ENCODE measurements at regions of chr6 and their contacts with region 1.

Region 1: GRCh38 chr6:41920921-41921711 is at the starts of genes BYSL and MED20:
- DNase-seq: peak; percentile 83
- ATAC-seq: peak; percentile 91
- H3K4me3 ChIP-seq: peak within 1 kb of the TSS; percentile 67
- H3K27ac ChIP-seq: peak within 1 kb of the TSS; percentile 95
- H3K4me1 ChIP-seq: peaks cover 4% of the 10 kb centered on the region; the same call in 1 of the 2 replicates
- H3K27me3 ChIP-seq: no peaks in the 10 kb centered on the region
- CTCF ChIP-seq: peak; percentile 92 to 98 (median 94)
- EP300 ChIP-seq: 0 out of 4 replicates have a peak, but pooled peaks have one; percentile 35 to 57
- POLR2A ChIP-seq: peak; percentile 81
- RAD21 ChIP-seq: no peak
- polyA plus RNA-seq, gene BYSL: 12.6 to 28.4 TPM
- polyA plus RNA-seq, gene MED20: 15.9 to 21.7 TPM

Region 2: GRCh38 chr6:41787219-41787917 is 133.7 kb before region 1 on chr6 and contains the start of gene TOMM6:
- CTCF ChIA-PET with region 1: interaction called, 39 read pairs
- POLR2A ChIA-PET with region 1: interaction called, 9 read pairs
- RAD21 ChIA-PET with region 1: interaction called, 16 read pairs
- SMC1A ChIA-PET with region 1: interaction called, 6 read pairs
- in situ Hi-C with region 1: no loop called
- intact Hi-C with region 1: loop called (anchors 5 kb)
- DNase-seq: peak; percentile 77
- ATAC-seq: peak; percentile 90
- H3K4me3 ChIP-seq: peak within 1 kb of the TSS; percentile 100
- H3K27ac ChIP-seq: peak within 1 kb of the TSS; percentile 93
- H3K4me1 ChIP-seq: peaks cover 22% of the 10 kb centered on the region
- H3K27me3 ChIP-seq: no peaks in the 10 kb centered on the region
- CTCF ChIP-seq: peak; percentile 84 to 89 (median 88)
- EP300 ChIP-seq: no peak
- POLR2A ChIP-seq: peak; percentile 89
- RAD21 ChIP-seq: no peak
- polyA plus RNA-seq, gene TOMM6: 653 to 729 TPM

Region 3: DNA sequence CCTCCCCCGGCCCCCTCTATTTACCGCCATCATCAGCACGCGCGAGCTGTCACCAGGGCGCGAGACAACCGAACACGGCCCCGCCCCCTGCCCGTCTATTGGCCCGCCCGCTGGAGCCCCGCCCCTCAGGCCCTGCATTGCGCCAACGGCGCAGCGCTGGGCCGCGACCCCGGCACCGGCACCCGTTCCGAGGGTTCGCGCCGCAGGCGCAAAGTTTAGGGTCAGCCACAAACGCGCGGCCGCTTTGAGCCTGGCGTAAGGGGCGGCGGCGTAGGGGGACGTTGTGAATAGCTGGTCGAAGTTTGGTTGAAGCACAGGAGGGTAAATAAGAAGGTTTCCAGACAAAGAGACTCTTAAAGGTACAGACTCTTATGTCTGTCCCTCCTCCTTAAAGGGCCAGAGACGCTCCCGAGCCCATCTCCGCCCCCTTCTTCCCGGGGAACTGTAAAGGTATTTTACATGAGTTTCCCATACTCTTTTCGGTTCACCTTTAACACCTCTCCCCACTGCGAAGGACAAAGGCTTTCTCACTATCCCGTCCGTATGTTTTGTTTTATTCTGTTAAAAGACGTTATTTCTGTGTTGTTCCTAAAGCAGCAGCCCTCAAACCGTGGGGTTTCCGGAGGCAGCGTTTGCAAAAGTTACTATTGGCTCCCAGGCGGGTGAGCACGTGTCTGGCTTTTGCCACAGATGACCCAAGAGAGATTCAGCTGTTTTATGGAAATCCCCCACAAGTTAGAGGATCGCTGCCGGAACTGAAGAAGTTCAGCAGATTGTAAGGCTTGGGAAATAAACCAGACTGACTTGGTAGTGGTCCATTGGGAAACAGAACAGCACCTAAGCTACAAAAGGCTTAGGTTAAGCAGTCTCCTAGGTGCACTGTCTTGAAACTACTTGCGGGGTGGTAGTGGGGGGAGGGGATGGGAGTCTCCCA is 25.5 kb before region 1 on chr6 and contains the start of gene USP49:
- CTCF ChIA-PET with region 1: interaction called, 14 read pairs
- POLR2A ChIA-PET with region 1: interaction called, 8 read pairs
- RAD21 ChIA-PET with region 1: interaction called, 10 read pairs
- SMC1A ChIA-PET with region 1: interaction called, 8 read pairs
- in situ Hi-C with region 1: no loop called
- intact Hi-C with region 1: loop called (anchors 1 kb)
- DNase-seq: peak; percentile 65
- ATAC-seq: peak; percentile 96
- H3K4me3 ChIP-seq: peak within 1 kb of the TSS; percentile 89
- H3K27ac ChIP-seq: peak within 1 kb of the TSS; percentile 90
- H3K4me1 ChIP-seq: peaks cover 6% of the 10 kb centered on the region; the same call in 1 of the 2 replicates
- H3K27me3 ChIP-seq: no peaks in the 10 kb centered on the region
- CTCF ChIP-seq: no peak
- EP300 ChIP-seq: no peak
- POLR2A ChIP-seq: peak; percentile 75
- RAD21 ChIP-seq: no peak
- polyA plus RNA-seq, gene USP49: 1.0 TPM

Region 4: GRCh38 chr6:41941280-41942066 is 20.4 kb after region 1 on chr6 and contains the start of gene CCND3:
- CTCF ChIA-PET with region 1: interaction called, 137 read pairs
- POLR2A ChIA-PET with region 1: interaction called, 4 read pairs
- RAD21 ChIA-PET with region 1: interaction called, 16 read pairs
- SMC1A ChIA-PET with region 1: interaction called, 12 read pairs
- in situ Hi-C with region 1: no loop called
- intact Hi-C with region 1: no loop called
- DNase-seq: peak; percentile 44
- ATAC-seq: peak; percentile 94
- H3K4me3 ChIP-seq: peak within 1 kb of the TSS; percentile 98
- H3K27ac ChIP-seq: peak within 1 kb of the TSS; percentile 61
- H3K4me1 ChIP-seq: peaks cover 29% of the 10 kb centered on the region
- H3K27me3 ChIP-seq: no peaks in the 10 kb centered on the region
- CTCF ChIP-seq: no peak
- EP300 ChIP-seq: no peak
- POLR2A ChIP-seq: peak; percentile 27; the same call in 1 of the 2 replicates
- RAD21 ChIP-seq: no peak
- polyA plus RNA-seq, gene CCND3: 6.0 to 16.3 TPM

Region 5: DNA sequence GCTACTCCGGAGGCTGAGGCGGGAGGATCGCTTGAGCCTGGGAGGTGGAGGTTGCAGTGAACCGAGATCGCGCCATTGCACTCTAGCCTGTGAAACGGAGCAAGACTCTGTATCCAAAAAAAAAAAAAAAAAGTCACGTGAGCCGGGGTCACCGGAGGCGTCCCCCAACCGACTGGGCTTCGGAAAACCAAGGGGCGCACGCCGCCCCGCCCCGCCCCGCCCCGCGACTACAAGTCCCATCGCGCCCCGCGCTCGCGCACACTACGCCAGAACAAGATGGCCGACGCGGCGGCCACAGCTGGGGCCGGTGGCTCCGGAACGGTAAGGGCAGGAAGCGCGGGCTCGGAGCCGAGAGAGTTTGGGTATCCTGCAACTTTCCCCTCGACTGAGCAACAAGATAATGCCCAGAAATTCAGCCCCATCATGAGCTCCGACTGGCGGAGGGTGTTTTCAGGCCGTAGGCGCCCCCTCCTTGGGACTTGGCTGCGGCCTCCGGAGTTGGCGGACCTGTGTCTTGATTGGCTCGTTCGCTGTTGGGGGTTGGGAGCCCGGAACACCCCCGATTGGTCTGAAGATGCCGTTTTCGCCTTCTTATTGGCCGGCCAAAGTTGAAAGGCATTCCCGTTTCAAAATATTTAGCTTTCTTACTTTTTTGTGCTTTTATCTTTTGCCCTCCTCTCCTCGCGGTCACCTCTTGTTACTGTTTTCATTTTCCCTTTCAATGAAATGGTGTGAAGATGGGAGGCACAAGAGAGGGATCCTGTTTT is 129.3 kb after region 1 on chr6 and contains the start of gene TAF8:
- CTCF ChIA-PET with region 1: interaction called, 90 read pairs
- POLR2A ChIA-PET with region 1: interaction called, 4 read pairs
- RAD21 ChIA-PET with region 1: interaction called, 9 read pairs
- SMC1A ChIA-PET with region 1: interaction called, 23 read pairs
- in situ Hi-C with region 1: no loop called
- intact Hi-C with region 1: no loop called
- DNase-seq: peak; percentile 77
- ATAC-seq: peak; percentile 89
- H3K4me3 ChIP-seq: peak within 1 kb of the TSS; percentile 95
- H3K27ac ChIP-seq: peak within 1 kb of the TSS; percentile 97
- H3K4me1 ChIP-seq: peaks cover 28% of the 10 kb centered on the region
- H3K27me3 ChIP-seq: no peaks in the 10 kb centered on the region
- CTCF ChIP-seq: no peak
- EP300 ChIP-seq: no peak
- POLR2A ChIP-seq: peak; percentile 99
- RAD21 ChIP-seq: no peak
- polyA plus RNA-seq, gene TAF8: 17.5 to 25.5 TPM